K562 (cell line): ENCODE measurements at regions of chr12 and their contacts with region 1.

Region 1: GRCh38 chr12:52023182-52023975 is 16.6 kb downstream of the TAMALIN start:
- DNase-seq: peak; percentile 88 to 94 (median 91)
- ATAC-seq: peak; percentile 84
- H3K4me3 ChIP-seq: peak overlapping the region; percentile 45
- H3K27ac ChIP-seq: no peak overlapping the region
- H3K4me1 ChIP-seq: peaks cover 0 to 27% of the 10 kb centered on the region in 2 experiments; a peak in 3 of 5 replicates
- H3K27me3 ChIP-seq: peaks cover 0 to 13% of the 10 kb centered on the region in 2 experiments; a peak in 2 of 5 replicates
- CTCF ChIP-seq: peak; percentile 89 to 95 (median 91)
- EP300 ChIP-seq: no peak
- POLR2A ChIP-seq: no peak
- RAD21 ChIP-seq: peak; percentile 95 to 96

Region 2: DNA sequence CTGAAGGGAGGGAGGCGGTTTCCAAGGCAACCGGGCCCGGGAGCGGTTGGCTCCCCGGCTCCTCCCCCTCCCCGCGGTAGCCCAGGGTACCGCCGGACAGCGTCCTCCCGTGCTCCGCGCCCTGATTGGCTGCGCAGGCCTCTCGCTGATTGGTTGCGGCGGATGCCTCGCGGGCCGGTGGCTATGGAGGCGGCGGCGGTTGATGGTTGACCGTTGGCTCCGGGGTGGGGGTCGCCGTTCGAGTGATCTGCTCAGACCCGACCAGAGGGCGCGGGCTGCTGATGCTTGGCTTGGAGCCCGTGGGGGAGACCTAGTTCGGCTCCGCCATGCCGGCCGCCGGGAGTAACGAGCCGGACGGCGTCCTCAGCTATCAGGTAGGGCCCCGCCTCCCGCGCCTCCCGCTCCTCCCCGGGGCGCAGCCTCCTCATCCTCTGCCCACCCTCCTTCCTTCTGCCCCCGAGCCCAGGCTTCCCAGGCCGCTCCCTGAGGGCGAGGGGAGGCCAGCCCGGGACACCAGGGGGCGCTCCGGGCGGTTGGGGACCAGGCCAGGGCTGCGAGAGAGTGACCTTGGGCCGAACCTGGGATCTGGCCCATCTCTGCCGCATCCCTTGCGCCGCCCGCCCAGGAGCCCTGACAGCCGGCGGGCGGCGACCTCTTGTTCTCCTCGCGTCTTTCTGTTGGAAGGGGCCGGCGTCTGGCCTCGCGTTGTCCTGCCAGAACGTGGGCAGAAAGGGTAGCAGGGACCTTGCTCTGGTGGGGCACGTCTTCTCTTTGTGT is 598.5 kb before region 1 on chr12 and contains the start of gene SLC4A8:
- CTCF ChIA-PET with region 1: interaction called, 6 read pairs
- POLR2A ChIA-PET with region 1: no interaction called
- in situ Hi-C with region 1: loop called (anchors 25 kb)
- intact Hi-C with region 1: no loop called
- DNase-seq: peak; percentile 82 to 97 (median 94)
- ATAC-seq: peak; percentile 99
- H3K4me3 ChIP-seq: peak within 1 kb of the TSS; percentile 16; the same call in 1 of the 2 replicates
- H3K27ac ChIP-seq: no peak within 1 kb of the TSS
- H3K4me1 ChIP-seq: peaks cover 0 to 9% of the 10 kb centered on the region in 2 experiments; a peak in 2 of 5 replicates
- H3K27me3 ChIP-seq: peaks cover 13 to 17% of the 10 kb centered on the region in 2 experiments; a peak in 4 of 5 replicates
- CTCF ChIP-seq: peak; percentile 66 to 81 (median 79)
- EP300 ChIP-seq: no peak
- POLR2A ChIP-seq: no peak
- RAD21 ChIP-seq: peak; percentile 53 to 70
- polyA plus RNA-seq, gene SLC4A8: 0.06 TPM in 1 of 2 experiments, not detected in the other

Region 3: DNA sequence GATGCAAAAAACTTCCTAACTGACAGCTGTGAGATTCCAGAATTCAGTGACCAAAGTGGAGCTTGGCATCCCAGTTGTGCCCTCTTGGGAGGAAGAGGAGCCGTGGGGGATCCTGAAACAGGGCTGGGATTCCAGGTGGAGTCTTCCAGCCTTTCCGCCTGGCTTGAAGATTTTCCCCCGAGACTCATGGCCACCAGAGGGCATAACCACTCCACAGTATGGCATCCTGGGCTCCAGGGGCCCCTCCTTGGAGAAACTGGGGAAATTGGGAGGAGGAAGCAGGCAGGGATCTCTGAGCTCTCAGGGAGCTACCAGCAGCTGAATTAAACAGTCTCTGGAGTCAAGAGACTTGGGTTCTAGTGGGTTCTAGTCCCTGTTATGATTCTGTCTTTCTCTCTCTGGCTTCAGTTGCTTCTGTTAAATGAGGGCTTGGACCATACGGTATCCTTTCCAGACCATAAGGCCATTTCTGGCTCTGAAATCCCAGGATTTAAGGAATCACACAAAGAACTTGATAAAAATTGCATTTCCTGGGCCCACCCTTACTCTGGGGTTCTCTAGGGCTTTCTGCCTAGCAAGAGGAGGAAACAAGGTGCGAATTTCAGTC is 19.2 kb before region 1 on chr12:
- CTCF ChIA-PET with region 1: interaction called, 63 read pairs
- POLR2A ChIA-PET with region 1: interaction called, 13 read pairs
- in situ Hi-C with region 1: no loop called
- intact Hi-C with region 1: loop called (anchors 1 kb)
- DNase-seq: peak; percentile 62 to 68 (median 65)
- ATAC-seq: peak; percentile 77
- H3K4me3 ChIP-seq: no peak overlapping the region
- H3K27ac ChIP-seq: no peak overlapping the region
- H3K4me1 ChIP-seq: peaks cover under 1 to 23% of the 10 kb centered on the region in 2 experiments; a peak in 3 of 5 replicates
- H3K27me3 ChIP-seq: no peaks in the 10 kb centered on the region
- CTCF ChIP-seq: peak; percentile 75 to 88 (median 81)
- EP300 ChIP-seq: no peak
- POLR2A ChIP-seq: no peak
- RAD21 ChIP-seq: peak; percentile 93 to 94

Region 4: GRCh38 chr12:52069327-52070184 is 46.2 kb after region 1 on chr12 and contains the start of gene ATG101:
- CTCF ChIA-PET with region 1: interaction called, 18 read pairs
- POLR2A ChIA-PET with region 1: interaction called, 7 read pairs
- in situ Hi-C with region 1: no loop called
- intact Hi-C with region 1: loop called (anchors 1 kb)
- DNase-seq: peak; percentile 89 to 95 (median 93)
- ATAC-seq: peak; percentile 98
- H3K4me3 ChIP-seq: peak within 1 kb of the TSS; percentile 65
- H3K27ac ChIP-seq: peak within 1 kb of the TSS; percentile 87
- H3K4me1 ChIP-seq: peaks cover 9 to 16% of the 10 kb centered on the region in 2 experiments
- H3K27me3 ChIP-seq: peaks cover 0 to 4% of the 10 kb centered on the region in 2 experiments; a peak in 2 of 5 replicates
- CTCF ChIP-seq: peak; percentile 92 to 97 (median 96)
- EP300 ChIP-seq: peak; percentile 68
- POLR2A ChIP-seq: peak; percentile 90
- RAD21 ChIP-seq: peak in 1 of 2 experiments; percentile 23; a peak in 1 of 4 replicates
- polyA plus RNA-seq, gene ATG101: 2.9 to 3.9 TPM

Region 5: GRCh38 chr12:52121824-52122539 is 98.6 kb after region 1 on chr12:
- CTCF ChIA-PET with region 1: interaction called, 32 read pairs
- POLR2A ChIA-PET with region 1: interaction called, 3 read pairs
- in situ Hi-C with region 1: loop called (anchors 5 kb)
- intact Hi-C with region 1: loop called (anchors 1 kb)
- DNase-seq: peak; percentile 68 to 73 (median 72)
- ATAC-seq: peak; percentile 72
- H3K4me3 ChIP-seq: no peak overlapping the region
- H3K27ac ChIP-seq: no peak overlapping the region
- H3K4me1 ChIP-seq: peaks cover 8 to 14% of the 10 kb centered on the region in 2 experiments; a peak in 3 of 5 replicates
- H3K27me3 ChIP-seq: peaks cover 20 to 62% of the 10 kb centered on the region in 2 experiments
- CTCF ChIP-seq: peak; percentile 70 to 86 (median 79)
- EP300 ChIP-seq: no peak
- POLR2A ChIP-seq: no peak
- RAD21 ChIP-seq: peak; percentile 28 to 69; a peak in 3 of 4 replicates

Region 6: DNA sequence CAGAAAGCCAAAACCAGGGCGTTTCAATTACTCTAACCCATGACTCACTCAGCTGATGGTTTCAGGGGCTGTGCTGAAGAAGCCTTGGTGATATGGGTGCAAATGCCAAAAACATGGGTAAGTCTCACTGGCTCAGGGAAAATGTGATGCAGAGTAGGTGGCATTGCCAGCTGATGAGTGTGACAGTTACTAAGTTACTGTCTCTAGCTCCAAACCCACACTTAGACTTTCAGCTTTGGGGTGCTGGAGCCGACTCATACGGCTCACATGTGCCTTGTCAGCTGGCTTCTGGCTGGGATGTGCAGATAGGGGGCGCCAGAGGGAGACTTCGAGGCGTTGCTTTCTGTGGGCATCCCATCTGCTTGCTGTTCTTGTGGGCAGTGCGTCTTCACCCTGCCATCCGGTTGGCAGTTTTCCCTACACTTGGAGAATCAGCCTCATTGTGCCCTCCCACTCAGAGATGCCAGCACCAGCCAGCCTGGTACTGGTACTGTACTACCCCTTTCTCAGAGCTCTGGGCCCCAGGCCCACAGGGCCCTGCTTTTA is 198.6 kb after region 1 on chr12:
- CTCF ChIA-PET with region 1: no interaction called
- POLR2A ChIA-PET with region 1: no interaction called
- in situ Hi-C with region 1: no loop called
- intact Hi-C with region 1: no loop called
- DNase-seq: peak; percentile 45 to 69 (median 52)
- ATAC-seq: peak; percentile 89
- H3K4me3 ChIP-seq: no peak overlapping the region
- H3K27ac ChIP-seq: no peak overlapping the region
- H3K4me1 ChIP-seq: no peaks in the 10 kb centered on the region
- H3K27me3 ChIP-seq: peaks cover 0 to 4% of the 10 kb centered on the region in 2 experiments; a peak in 1 of 5 replicates
- CTCF ChIP-seq: peak; percentile 60 to 84 (median 72)
- EP300 ChIP-seq: no peak
- POLR2A ChIP-seq: no peak
- RAD21 ChIP-seq: peak in 1 of 2 experiments; percentile 47; a peak in 1 of 4 replicates

Region 7: GRCh38 chr12:52951640-52952431 is 928.5 kb after region 1 on chr12:
- CTCF ChIA-PET with region 1: no interaction called
- POLR2A ChIA-PET with region 1: no interaction called
- in situ Hi-C with region 1: no loop called
- intact Hi-C with region 1: no loop called
- DNase-seq: peak; percentile 49 to 57 (median 50)
- ATAC-seq: peak; percentile 40
- H3K4me3 ChIP-seq: peak overlapping the region; percentile 99; the same call in 1 of the 2 replicates
- H3K27ac ChIP-seq: peak overlapping the region; percentile 72
- H3K4me1 ChIP-seq: peaks cover 41 to 42% of the 10 kb centered on the region in 2 experiments
- H3K27me3 ChIP-seq: no peaks in the 10 kb centered on the region
- CTCF ChIP-seq: peak; percentile 51 to 76 (median 52)
- EP300 ChIP-seq: no peak
- POLR2A ChIP-seq: no peak
- RAD21 ChIP-seq: peak; percentile 63 to 76